ENCODE measurements at regions of chr5 and their contacts with region 1.

Region 1: DNA sequence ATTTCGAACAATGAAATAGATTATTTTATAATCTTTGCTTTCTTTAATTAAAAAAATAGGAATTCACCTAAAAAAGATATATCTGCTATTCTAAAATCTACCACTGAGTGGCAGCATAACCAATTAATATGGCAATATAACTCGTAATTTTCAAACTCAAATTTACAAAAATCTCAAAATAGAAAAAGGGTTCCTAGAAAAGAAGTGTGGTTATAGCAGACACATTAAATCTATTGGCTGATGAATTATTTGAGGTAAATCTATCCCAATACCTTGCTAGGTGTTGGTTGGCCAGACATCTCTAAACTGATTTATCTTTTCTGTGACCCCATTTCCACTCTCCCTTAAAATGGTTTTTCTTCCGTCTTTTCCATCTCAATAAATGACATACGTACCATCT is 30.2 kb upstream of the NRG2 start:
- DNase-seq: no peak
- H3K4me3 Mint-ChIP-seq: no peak overlapping the region
- H3K27ac Mint-ChIP-seq: no peak overlapping the region
- H3K4me1 Mint-ChIP-seq: peaks cover 2% of the 10 kb centered on the region
- H3K27me3 Mint-ChIP-seq: peaks cover 43% of the 10 kb centered on the region

Region 2: GRCh38 chr5:140084541-140084940 is 11.2 kb after region 1 on chr5:
- intact Hi-C with region 1: no loop called
- DNase-seq: no peak
- H3K4me3 Mint-ChIP-seq: no peak overlapping the region
- H3K27ac Mint-ChIP-seq: no peak overlapping the region
- H3K4me1 Mint-ChIP-seq: no peaks in the 10 kb centered on the region
- H3K27me3 Mint-ChIP-seq: peaks cover 46% of the 10 kb centered on the region

Region 3: GRCh38 chr5:140145818-140146522 is 72.7 kb after region 1 on chr5:
- intact Hi-C with region 1: loop called (anchors 1 kb)
- DNase-seq: peak; percentile 85
- H3K4me3 Mint-ChIP-seq: no peak overlapping the region
- H3K27ac Mint-ChIP-seq: no peak overlapping the region
- H3K4me1 Mint-ChIP-seq: peaks cover 8% of the 10 kb centered on the region
- H3K27me3 Mint-ChIP-seq: peaks cover 43% of the 10 kb centered on the region

Region 4: GRCh38 chr5:140157032-140157803 is 83.9 kb after region 1 on chr5:
- intact Hi-C with region 1: loop called (anchors 1 kb)
- DNase-seq: peak; percentile 96
- H3K4me3 Mint-ChIP-seq: peak overlapping the region; percentile 63
- H3K27ac Mint-ChIP-seq: no peak overlapping the region
- H3K4me1 Mint-ChIP-seq: peaks cover 6% of the 10 kb centered on the region
- H3K27me3 Mint-ChIP-seq: peaks cover 6% of the 10 kb centered on the region

Region 5: GRCh38 chr5:140357726-140358093 is 284.4 kb after region 1 on chr5:
- intact Hi-C with region 1: loop called (anchors 10 kb)
- DNase-seq: peak; percentile 94
- H3K4me3 Mint-ChIP-seq: peak overlapping the region; percentile 60
- H3K27ac Mint-ChIP-seq: no peak overlapping the region
- H3K4me1 Mint-ChIP-seq: peaks cover 19% of the 10 kb centered on the region
- H3K27me3 Mint-ChIP-seq: peaks cover 5% of the 10 kb centered on the region

Measured in activated CD4-positive, alpha-beta T cell treated with anti-CD3 and anti-CD28 coated beads, Interleukin-2, amount 10 ng/mL, durations not matched to agents 24 days and 14 days (primary cell).